Activated CD4-positive, alpha-beta T cell treated with anti-CD3 and anti-CD28 coated beads for 36 hours (primary cell): ENCODE measurements at regions of chr17 and their contacts with region 1.

Region 1: GRCh38 chr17:8118769-8119580 is 661 bp upstream of the ALOXE3 start:
- DNase-seq: peak; percentile 94
- ATAC-seq: peak; percentile 58
- H3K4me3 Mint-ChIP-seq: peak overlapping the region; percentile 90
- H3K27ac Mint-ChIP-seq: peak overlapping the region; percentile 94
- H3K4me1 Mint-ChIP-seq: peaks cover 46% of the 10 kb centered on the region
- H3K27me3 Mint-ChIP-seq: peaks cover 29% of the 10 kb centered on the region

Region 2: DNA sequence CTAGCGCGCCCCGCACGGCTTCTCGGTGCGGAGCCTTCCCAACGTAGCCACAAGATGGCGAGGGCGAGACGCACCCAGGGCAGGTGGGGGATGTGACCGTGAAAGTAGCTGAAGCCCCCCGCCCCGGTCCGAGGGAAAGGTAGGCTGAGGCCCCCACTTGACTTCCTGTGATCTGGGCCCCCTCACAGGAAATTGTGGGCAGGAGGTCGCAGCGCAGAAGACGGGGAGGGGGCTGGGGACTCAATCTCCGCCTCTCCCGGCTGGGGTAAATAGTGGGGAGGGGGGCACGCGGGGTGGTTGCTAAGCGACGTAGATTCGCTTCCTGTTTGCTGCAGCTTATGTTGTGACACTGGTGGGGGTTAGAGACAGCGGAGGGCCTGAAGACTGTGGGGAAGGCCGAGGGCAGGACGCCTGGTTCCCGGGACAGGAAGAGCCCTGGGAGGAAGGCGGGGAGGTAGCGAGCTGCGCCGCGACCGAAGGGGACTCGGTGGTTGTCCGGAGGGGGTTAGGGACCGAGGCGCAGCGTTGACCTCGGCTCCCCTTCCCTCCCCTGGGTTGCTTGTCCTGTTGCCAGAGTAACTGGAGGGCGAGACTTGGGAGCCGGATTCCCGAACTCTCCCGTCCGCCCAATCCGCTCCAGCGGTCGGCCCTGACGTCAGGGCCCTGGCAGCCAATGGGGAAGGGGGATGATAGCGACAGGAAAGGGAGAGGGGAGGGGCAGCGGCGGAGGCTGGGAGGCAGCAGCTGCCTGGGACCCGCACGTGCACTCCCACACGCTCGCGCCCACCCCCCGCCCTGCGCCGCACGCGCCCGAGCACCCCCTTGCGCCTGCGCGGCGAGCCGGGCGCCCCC is 283.8 kb before region 1 on chr17:
- CTCF ChIA-PET with region 1: no interaction called
- POLR2A ChIA-PET with region 1: no interaction called
- intact Hi-C with region 1: loop called in 1 of 2 experiments (anchors 2 kb)
- DNase-seq: peak; percentile 96
- ATAC-seq: peak; percentile 57
- H3K4me3 Mint-ChIP-seq: peak overlapping the region; percentile 93
- H3K27ac Mint-ChIP-seq: peak overlapping the region; percentile 91
- H3K4me1 Mint-ChIP-seq: peaks cover 42% of the 10 kb centered on the region
- H3K27me3 Mint-ChIP-seq: no peaks in the 10 kb centered on the region

Region 3: GRCh38 chr17:8073627-8074484 is 45.1 kb before region 1 on chr17:
- CTCF ChIA-PET with region 1: interaction called, 42 read pairs
- POLR2A ChIA-PET with region 1: interaction called, 3 read pairs
- intact Hi-C with region 1: loop called (anchors 1 kb)
- DNase-seq: peak; percentile 94
- ATAC-seq: peak; percentile 93
- H3K4me3 Mint-ChIP-seq: peak overlapping the region; percentile 66
- H3K27ac Mint-ChIP-seq: peak overlapping the region; percentile 66
- H3K4me1 Mint-ChIP-seq: peaks cover 20% of the 10 kb centered on the region
- H3K27me3 Mint-ChIP-seq: peaks cover 31% of the 10 kb centered on the region

Region 4: GRCh38 chr17:8156246-8156992 is 37.4 kb after region 1 on chr17:
- CTCF ChIA-PET with region 1: interaction called, 88 read pairs
- POLR2A ChIA-PET with region 1: interaction called, 11 read pairs
- intact Hi-C with region 1: loop called (anchors 1 kb)
- DNase-seq: peak; percentile 100
- ATAC-seq: peak; percentile 75
- H3K4me3 Mint-ChIP-seq: no peak overlapping the region
- H3K27ac Mint-ChIP-seq: no peak overlapping the region
- H3K4me1 Mint-ChIP-seq: peaks cover 49% of the 10 kb centered on the region
- H3K27me3 Mint-ChIP-seq: no peaks in the 10 kb centered on the region

Region 5: GRCh38 chr17:8222630-8223356 is 103.8 kb after region 1 on chr17:
- CTCF ChIA-PET with region 1: interaction called, 48 read pairs
- POLR2A ChIA-PET with region 1: interaction called, 5 read pairs
- intact Hi-C with region 1: loop called (anchors 1 kb)
- DNase-seq: peak; percentile 94
- ATAC-seq: peak; percentile 35
- H3K4me3 Mint-ChIP-seq: peak overlapping the region; percentile 98
- H3K27ac Mint-ChIP-seq: peak overlapping the region; percentile 98
- H3K4me1 Mint-ChIP-seq: peaks cover 54% of the 10 kb centered on the region
- H3K27me3 Mint-ChIP-seq: no peaks in the 10 kb centered on the region

Region 6: DNA sequence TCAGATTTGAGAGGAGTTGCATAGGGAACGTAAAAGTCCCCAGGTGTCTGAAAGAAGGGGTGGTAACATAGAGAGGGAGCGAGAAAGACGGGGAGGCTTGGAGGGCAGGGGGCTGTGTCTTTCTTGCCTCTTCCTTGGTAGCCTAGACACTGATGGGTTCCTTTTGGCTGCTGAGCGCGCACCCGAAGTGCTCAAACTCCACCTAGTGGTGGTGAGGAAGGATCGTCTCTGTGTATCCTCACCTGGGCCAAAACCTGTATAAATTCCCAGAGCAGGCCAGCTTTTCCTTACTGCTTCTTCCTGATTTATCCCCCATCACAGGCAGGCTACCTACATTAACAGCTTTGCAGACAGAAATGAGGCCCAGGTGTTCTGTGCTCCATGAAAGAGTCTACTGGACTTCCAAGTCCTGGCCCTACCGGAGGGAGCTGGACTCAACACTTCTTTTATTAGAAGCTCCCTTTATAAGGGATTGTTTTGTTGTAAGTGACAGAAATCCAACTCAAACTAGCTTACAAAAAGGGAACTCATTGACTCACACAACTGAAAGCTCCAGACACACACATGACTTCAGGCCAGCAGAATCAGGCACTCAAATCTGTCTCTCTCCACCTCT is 181.8 kb after region 1 on chr17:
- CTCF ChIA-PET with region 1: interaction called, 12 read pairs
- POLR2A ChIA-PET with region 1: no interaction called
- intact Hi-C with region 1: loop called in 1 of 2 experiments (anchors 2 kb)
- DNase-seq: peak; percentile 76
- ATAC-seq: peak; percentile 97
- H3K4me3 Mint-ChIP-seq: peak overlapping the region; percentile 16
- H3K27ac Mint-ChIP-seq: peak overlapping the region; percentile 6
- H3K4me1 Mint-ChIP-seq: peaks cover 8% of the 10 kb centered on the region
- H3K27me3 Mint-ChIP-seq: no peaks in the 10 kb centered on the region

Region 7: GRCh38 chr17:8354236-8354635 is 235.3 kb after region 1 on chr17:
- CTCF ChIA-PET with region 1: no interaction called
- POLR2A ChIA-PET with region 1: no interaction called
- intact Hi-C with region 1: no loop called
- DNase-seq: no peak
- ATAC-seq: no peak
- H3K4me3 Mint-ChIP-seq: no peak overlapping the region
- H3K27ac Mint-ChIP-seq: no peak overlapping the region
- H3K4me1 Mint-ChIP-seq: no peaks in the 10 kb centered on the region
- H3K27me3 Mint-ChIP-seq: peaks cover 3% of the 10 kb centered on the region